Vagina (tissue), 2 donors: ENCODE measurements at regions of chr9 and their contacts with region 1.

Region 1: GRCh38 chr9:33867747-33868439 is 50.9 kb downstream of the UBE2R2 start:
- DNase-seq: no peak
- H3K4me3 ChIP-seq: no peak overlapping the region
- H3K27ac ChIP-seq: peak overlapping the region; percentile 57
- H3K4me1 ChIP-seq: peaks cover 50% of the 10 kb centered on the region
- H3K27me3 ChIP-seq: no peaks in the 10 kb centered on the region
- CTCF ChIP-seq: no peak
- POLR2A ChIP-seq: no peak

Region 2: GRCh38 chr9:33924978-33925797 is 57.3 kb after region 1 on chr9:
- intact Hi-C with region 1: loop called (anchors 10 kb)
- DNase-seq: no peak
- H3K4me3 ChIP-seq: no peak overlapping the region
- H3K27ac ChIP-seq: no peak overlapping the region
- H3K4me1 ChIP-seq: no peaks in the 10 kb centered on the region
- H3K27me3 ChIP-seq: no peaks in the 10 kb centered on the region
- CTCF ChIP-seq: peak in 1 of 3 experiments; percentile 11
- POLR2A ChIP-seq: no peak